IMR-90 (cell line): ENCODE measurements at regions of chr16 and their contacts with region 1.

Region 1: DNA sequence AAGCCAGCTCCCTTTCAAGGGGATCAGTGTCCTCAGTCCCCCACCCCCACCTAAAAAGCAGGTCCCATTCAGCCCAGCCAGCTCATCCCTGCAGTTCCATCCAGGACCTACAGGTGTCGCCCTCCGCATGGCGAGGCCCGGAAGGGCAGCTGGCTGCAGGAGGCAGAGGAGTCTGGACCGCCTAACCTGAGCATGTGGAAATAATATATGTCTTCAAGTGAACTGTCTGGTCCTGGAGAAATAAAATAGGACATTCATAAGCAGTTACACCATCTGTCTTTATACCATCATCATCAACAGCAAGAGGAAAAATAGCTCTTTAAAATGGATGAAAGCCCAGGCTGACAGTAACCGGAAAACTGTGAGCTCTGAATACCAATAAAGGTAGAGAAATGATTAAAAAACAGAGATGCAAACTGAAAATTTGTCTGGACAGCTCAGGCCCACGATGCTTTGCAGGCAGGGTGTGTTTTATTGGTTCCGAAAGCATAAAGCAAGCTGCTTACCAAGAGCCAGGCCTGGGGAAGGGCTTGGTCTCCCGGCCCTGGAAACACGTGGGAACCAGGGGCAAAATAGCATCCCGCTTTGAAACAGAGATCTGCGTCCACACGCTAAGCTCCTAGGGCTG is 215.2 kb downstream of the ZFHX3 start:
- DNase-seq: peak; percentile 70
- ATAC-seq: peak; percentile 97
- H3K4me3 ChIP-seq: no peak overlapping the region
- H3K27ac ChIP-seq: no peak overlapping the region
- H3K4me1 ChIP-seq: peaks cover 4% of the 10 kb centered on the region
- H3K27me3 ChIP-seq: no peaks in the 10 kb centered on the region
- CTCF ChIP-seq: peak; percentile 96
- POLR2A ChIP-seq: no peak
- RAD21 ChIP-seq: peak; percentile 96

Region 2: GRCh38 chr16:72847187-72848027 is 14.7 kb after region 1 on chr16:
- CTCF ChIA-PET with region 1: interaction called, 16 read pairs
- POLR2A ChIA-PET with region 1: no interaction called
- dilution Hi-C with region 1: no loop called
- in situ Hi-C with region 1: no loop called
- intact Hi-C with region 1: no loop called
- DNase-seq: peak; percentile 36
- ATAC-seq: peak; percentile 50; the same call in 1 of the 2 replicates
- H3K4me3 ChIP-seq: no peak overlapping the region
- H3K27ac ChIP-seq: no peak overlapping the region
- H3K4me1 ChIP-seq: peaks cover 27% of the 10 kb centered on the region
- H3K27me3 ChIP-seq: no peaks in the 10 kb centered on the region
- CTCF ChIP-seq: peak; percentile 38
- POLR2A ChIP-seq: no peak
- RAD21 ChIP-seq: peak; percentile 53

Region 3: DNA sequence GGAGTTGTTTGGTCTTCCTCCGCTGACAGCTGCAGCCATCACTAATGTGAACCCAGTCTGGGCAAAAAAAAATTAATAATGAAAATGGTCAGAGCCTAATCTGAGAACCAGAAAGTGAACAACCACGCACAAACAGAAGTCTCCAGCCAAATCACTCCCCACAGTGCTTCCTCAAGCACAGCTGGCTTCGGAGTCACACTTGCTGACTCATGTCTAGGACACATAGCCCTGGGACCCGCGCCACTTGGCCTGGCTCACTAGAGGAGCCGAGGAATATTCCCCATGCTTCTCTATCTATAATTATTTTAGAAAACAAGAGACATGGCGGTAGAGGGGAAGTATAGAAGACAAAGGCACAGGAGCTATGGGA is 106.0 kb after region 1 on chr16:
- CTCF ChIA-PET with region 1: interaction called, 5 read pairs
- POLR2A ChIA-PET with region 1: interaction called, 12 read pairs
- dilution Hi-C with region 1: no loop called
- in situ Hi-C with region 1: no loop called
- intact Hi-C with region 1: loop called (anchors 5 kb)
- DNase-seq: peak; percentile 93
- ATAC-seq: peak; percentile 93
- H3K4me3 ChIP-seq: peak overlapping the region; percentile 22; the same call in 1 of the 2 replicates
- H3K27ac ChIP-seq: peak overlapping the region; percentile 78
- H3K4me1 ChIP-seq: peaks cover 16% of the 10 kb centered on the region
- H3K27me3 ChIP-seq: no peaks in the 10 kb centered on the region
- CTCF ChIP-seq: no peak
- POLR2A ChIP-seq: no peak
- RAD21 ChIP-seq: peak; percentile 24; the same call in 1 of the 2 replicates

Region 4: DNA sequence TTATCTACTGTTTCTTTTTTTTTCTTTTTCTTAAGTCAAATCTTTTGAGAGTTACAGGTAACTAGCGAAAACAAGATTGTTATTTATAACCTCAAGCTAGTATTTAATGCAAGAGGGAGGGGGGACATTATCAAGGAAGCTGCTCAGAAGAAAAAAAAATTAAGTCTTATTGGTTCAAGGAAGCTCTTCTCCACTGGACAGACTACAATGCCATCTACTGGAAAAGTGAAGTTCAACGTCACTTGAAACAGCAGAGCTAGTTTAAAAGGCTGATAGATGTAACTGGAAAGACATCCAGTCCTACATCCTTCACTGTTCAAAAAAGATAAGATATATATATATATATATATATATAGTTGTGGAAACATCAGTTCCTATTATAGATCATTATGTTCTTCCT is 1045.9 kb after region 1 on chr16:
- CTCF ChIA-PET with region 1: interaction called, 3 read pairs
- POLR2A ChIA-PET with region 1: no interaction called
- dilution Hi-C with region 1: no loop called
- in situ Hi-C with region 1: no loop called
- intact Hi-C with region 1: loop called (anchors 10 kb)
- DNase-seq: peak; percentile 76
- ATAC-seq: peak; percentile 77
- H3K4me3 ChIP-seq: no peak overlapping the region
- H3K27ac ChIP-seq: no peak overlapping the region
- H3K4me1 ChIP-seq: no peaks in the 10 kb centered on the region
- H3K27me3 ChIP-seq: no peaks in the 10 kb centered on the region
- CTCF ChIP-seq: peak; percentile 67
- POLR2A ChIP-seq: no peak
- RAD21 ChIP-seq: peak; percentile 84